ENCODE measurements at regions of chr10 and their contacts with region 1.

Region 1: GRCh38 chr10:90857635-90858460 is at the start of gene HTR7:
- H3K4me3 Mint-ChIP-seq: peak within 1 kb of the TSS; percentile 94
- H3K27ac Mint-ChIP-seq: peak within 1 kb of the TSS; percentile 89
- H3K4me1 Mint-ChIP-seq: peaks cover 12% of the 10 kb centered on the region
- H3K27me3 Mint-ChIP-seq: peaks cover 28% of the 10 kb centered on the region

Region 2: GRCh38 chr10:90787393-90788198 is 70.3 kb before region 1 on chr10:
- intact Hi-C with region 1: loop called (anchors 5 kb)
- H3K4me3 Mint-ChIP-seq: no peak overlapping the region
- H3K27ac Mint-ChIP-seq: no peak overlapping the region
- H3K4me1 Mint-ChIP-seq: peaks cover 17% of the 10 kb centered on the region
- H3K27me3 Mint-ChIP-seq: peaks cover 2% of the 10 kb centered on the region

Region 3: GRCh38 chr10:90817128-90817889 is 40.5 kb before region 1 on chr10:
- intact Hi-C with region 1: no loop called
- H3K4me3 Mint-ChIP-seq: no peak overlapping the region
- H3K27ac Mint-ChIP-seq: peak overlapping the region; percentile 67
- H3K4me1 Mint-ChIP-seq: peaks cover 22% of the 10 kb centered on the region
- H3K27me3 Mint-ChIP-seq: no peaks in the 10 kb centered on the region